Activated B cell treated with CpG ODN at 0.5 μM for 24 hours (primary cell): ENCODE measurements at regions of chr11 and their contacts with region 1.

Region 1: GRCh38 chr11:33379947-33380346 is 122.8 kb downstream of the HIPK3 start:
- DNase-seq: peak; percentile 34
- ATAC-seq: peak; percentile 98
- H3K4me3 Mint-ChIP-seq: no peak overlapping the region
- H3K27ac Mint-ChIP-seq: no peak overlapping the region
- H3K4me1 Mint-ChIP-seq: peaks cover 6% of the 10 kb centered on the region
- H3K27me3 Mint-ChIP-seq: peaks cover 35% of the 10 kb centered on the region
- CTCF ChIP-seq: no peak

Region 2: DNA sequence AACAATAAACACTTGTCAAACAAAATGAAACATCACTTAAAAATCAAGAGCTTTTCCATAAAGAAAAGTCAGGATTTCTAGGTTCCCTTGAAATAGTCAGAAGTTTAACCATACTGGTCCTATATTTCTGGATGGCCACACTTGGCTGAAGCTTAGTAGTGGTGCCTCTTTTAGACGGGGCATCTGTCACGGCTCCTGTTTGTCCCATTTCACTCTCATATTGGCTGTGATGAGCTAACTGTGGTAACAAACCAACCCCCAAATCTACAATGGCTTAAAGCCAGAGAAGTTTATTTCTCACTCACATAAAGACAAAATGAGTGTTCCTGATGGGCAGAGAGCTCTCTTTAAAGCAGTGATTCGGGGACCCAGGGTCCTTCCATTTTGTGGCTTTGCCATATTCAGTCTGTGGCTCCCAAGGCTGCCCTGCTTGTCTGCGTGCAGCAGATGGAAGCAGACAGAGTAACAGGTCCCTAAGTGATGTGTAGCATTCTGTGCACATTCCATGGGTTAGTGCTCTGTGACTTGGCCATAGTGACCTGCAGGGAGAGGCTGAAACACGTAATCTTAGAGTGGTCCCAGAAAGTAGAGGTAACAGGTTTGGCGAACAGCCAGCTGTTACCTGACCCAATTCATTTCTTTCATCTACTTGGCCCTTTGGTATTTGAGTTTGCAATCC is 14.6 kb after region 1 on chr11:
- CTCF ChIA-PET with region 1: no interaction called
- POLR2A ChIA-PET with region 1: interaction called, 3 read pairs
- intact Hi-C with region 1: loop called (anchors 1 kb)
- DNase-seq: no peak
- ATAC-seq: no peak
- H3K4me3 Mint-ChIP-seq: no peak overlapping the region
- H3K27ac Mint-ChIP-seq: no peak overlapping the region
- H3K4me1 Mint-ChIP-seq: peaks cover 5% of the 10 kb centered on the region
- H3K27me3 Mint-ChIP-seq: peaks cover 6% of the 10 kb centered on the region
- CTCF ChIP-seq: no peak